ENCODE measurements at regions of chr2 and their contacts with region 1.

Region 1: GRCh38 chr2:136327162-136327852 is 209.4 kb upstream of the CXCR4 start:
- DNase-seq: peak; percentile 93
- H3K4me3 Mint-ChIP-seq: peak overlapping the region; percentile 60
- H3K27ac Mint-ChIP-seq: peak overlapping the region; percentile 90
- H3K4me1 Mint-ChIP-seq: peaks cover 73% of the 10 kb centered on the region
- H3K27me3 Mint-ChIP-seq: no peaks in the 10 kb centered on the region

Region 2: DNA sequence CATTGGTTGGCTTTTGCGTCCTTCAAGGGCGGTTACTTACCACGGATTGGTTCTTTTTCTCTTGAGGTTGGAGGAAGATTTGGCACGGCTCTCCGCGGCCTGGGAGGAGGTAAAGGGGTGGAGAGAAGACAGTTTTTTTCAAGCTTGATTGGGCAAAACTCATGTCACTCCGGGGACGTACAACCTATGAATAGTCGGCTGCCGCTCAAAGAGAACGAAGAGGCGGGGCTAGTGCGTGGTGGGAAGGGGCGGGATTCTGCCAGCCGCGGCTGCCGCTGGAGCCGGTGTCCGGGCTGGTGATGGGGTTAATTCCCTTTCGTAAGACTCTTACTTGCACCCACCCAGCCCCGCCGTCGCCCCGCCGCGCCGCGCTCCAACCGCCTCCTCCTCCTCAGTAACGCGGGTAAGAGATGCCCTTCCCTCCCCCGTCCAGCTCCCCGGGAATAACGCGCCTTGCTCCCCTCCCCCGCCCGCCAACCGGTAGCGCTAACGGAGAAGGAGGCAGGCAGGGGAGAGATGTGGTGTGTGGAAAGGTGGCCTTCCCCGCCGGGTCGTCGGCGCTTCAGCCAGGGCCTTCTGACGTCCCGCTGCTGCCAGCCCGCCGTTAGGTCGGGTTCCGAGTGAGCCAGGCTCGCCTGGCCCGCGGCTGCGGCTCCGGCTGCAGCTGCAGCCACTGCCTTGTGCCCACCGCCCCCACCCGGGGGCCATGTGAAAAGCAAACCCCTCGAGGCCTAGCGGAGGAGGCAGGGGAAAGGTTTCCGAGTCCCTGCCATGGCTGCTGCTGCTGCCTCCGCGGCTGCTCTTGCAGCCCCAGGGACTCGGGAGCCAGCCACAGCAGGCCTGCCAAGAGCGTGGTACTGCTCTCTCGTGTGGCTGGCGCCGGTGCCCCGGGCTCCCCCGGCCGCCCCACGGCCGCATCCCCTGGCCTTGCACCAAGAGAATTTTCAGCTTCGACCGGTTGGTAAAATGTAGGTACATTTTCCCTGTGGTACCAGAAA is 795.8 kb before region 1 on chr2 and contains the start of gene R3HDM1:
- CTCF ChIA-PET with region 1: no interaction called
- POLR2A ChIA-PET with region 1: no interaction called
- intact Hi-C with region 1: loop called (anchors 2 kb)
- DNase-seq: peak; percentile 97
- H3K4me3 Mint-ChIP-seq: no peak within 1 kb of the TSS
- H3K27ac Mint-ChIP-seq: peak within 1 kb of the TSS; percentile 71
- H3K4me1 Mint-ChIP-seq: peaks cover 29% of the 10 kb centered on the region
- H3K27me3 Mint-ChIP-seq: no peaks in the 10 kb centered on the region
- total RNA-seq, gene R3HDM1: 49.3 to 56.3 TPM

Region 3: GRCh38 chr2:136008205-136008865 is 319.0 kb before region 1 on chr2:
- CTCF ChIA-PET with region 1: no interaction called
- POLR2A ChIA-PET with region 1: no interaction called
- intact Hi-C with region 1: loop called (anchors 5 kb)
- DNase-seq: peak; percentile 87
- H3K4me3 Mint-ChIP-seq: no peak overlapping the region
- H3K27ac Mint-ChIP-seq: peak overlapping the region; percentile 72
- H3K4me1 Mint-ChIP-seq: peaks cover 49% of the 10 kb centered on the region
- H3K27me3 Mint-ChIP-seq: no peaks in the 10 kb centered on the region

Region 4: DNA sequence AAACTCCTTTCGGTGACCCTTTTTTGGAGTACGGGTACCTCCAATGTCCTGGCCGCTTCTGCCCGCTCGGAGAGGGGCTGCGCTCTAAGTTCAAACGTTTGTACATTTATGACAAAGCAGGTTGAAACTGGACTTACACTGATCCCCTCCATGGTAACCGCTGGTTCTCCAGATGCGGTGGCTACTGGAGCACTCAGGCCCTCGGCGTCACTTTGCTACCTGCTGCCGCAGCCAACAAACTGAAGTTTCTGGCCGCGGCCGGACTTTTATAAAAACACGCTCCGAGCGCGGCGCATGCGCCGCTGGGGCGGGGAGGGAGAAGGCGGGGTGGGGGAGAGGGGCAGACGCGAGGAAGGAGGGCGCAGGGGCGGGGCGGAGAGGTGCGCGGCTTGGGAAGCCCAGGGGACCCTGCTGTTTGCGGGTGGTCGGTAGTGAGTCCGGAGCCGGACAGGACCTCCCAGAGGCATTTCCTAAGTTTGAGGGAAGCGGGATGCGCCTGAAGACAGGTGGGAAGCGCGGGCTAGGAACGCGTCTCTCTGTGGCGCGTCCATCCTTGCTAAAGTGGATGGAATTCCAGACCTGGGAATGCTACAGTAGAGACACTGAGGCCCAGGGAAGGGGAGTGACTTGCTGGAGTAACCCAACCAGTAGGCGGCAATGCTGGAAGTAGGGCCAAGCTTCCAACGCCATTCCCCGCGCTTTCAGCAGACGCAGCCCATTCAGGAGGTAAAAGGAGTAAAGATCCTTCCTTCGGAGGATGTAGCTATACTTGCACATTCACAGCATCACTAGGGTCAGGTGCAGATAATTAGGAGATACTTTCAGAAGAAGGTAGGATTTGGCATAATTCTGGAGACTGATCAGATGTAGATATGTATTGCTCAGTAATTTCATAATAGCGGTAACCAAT is 209.1 kb before region 1 on chr2 and contains the start of gene CXCR4:
- CTCF ChIA-PET with region 1: no interaction called
- POLR2A ChIA-PET with region 1: interaction called, 7 read pairs
- intact Hi-C with region 1: loop called (anchors 1 kb)
- DNase-seq: peak; percentile 93
- H3K4me3 Mint-ChIP-seq: peak within 1 kb of the TSS; percentile 98
- H3K27ac Mint-ChIP-seq: peak within 1 kb of the TSS; percentile 98
- H3K4me1 Mint-ChIP-seq: peaks cover 54% of the 10 kb centered on the region
- H3K27me3 Mint-ChIP-seq: peaks cover 2% of the 10 kb centered on the region
- total RNA-seq, gene CXCR4: 139 to 141 TPM

Region 5: GRCh38 chr2:136281281-136282114 is 45.8 kb before region 1 on chr2:
- CTCF ChIA-PET with region 1: no interaction called
- POLR2A ChIA-PET with region 1: interaction called, 3 read pairs
- intact Hi-C with region 1: loop called (anchors 2 kb)
- DNase-seq: peak; percentile 64
- H3K4me3 Mint-ChIP-seq: no peak overlapping the region
- H3K27ac Mint-ChIP-seq: peak overlapping the region; percentile 70
- H3K4me1 Mint-ChIP-seq: peaks cover 42% of the 10 kb centered on the region
- H3K27me3 Mint-ChIP-seq: no peaks in the 10 kb centered on the region

Region 6: DNA sequence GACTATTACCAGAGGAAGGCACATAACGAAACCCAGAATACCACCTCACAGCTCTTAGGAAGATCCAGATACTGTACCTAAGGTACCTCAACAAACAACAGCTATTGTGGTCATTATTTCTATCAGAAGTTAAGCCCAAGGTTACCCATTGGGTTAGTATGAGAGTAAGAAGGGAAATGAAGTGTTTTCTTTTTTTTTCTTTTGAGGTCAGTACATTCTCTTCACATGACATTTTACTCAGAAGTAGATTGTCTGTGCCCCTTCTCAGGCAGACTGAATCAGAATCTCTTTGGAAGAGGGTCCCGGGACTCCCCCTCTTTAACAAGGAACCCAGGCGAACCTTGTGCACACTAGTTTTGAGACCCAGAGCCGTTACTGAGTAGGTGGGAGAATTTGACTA is 24.4 kb after region 1 on chr2:
- CTCF ChIA-PET with region 1: no interaction called
- POLR2A ChIA-PET with region 1: interaction called, 3 read pairs
- intact Hi-C with region 1: loop called (anchors 1 kb)
- DNase-seq: peak; percentile 51
- H3K4me3 Mint-ChIP-seq: no peak overlapping the region
- H3K27ac Mint-ChIP-seq: peak overlapping the region; percentile 18
- H3K4me1 Mint-ChIP-seq: peaks cover 26% of the 10 kb centered on the region
- H3K27me3 Mint-ChIP-seq: no peaks in the 10 kb centered on the region

Measured in activated CD4-positive, alpha-beta memory T cell treated with anti-CD3 and anti-CD28 coated beads for 36 hours (primary cell).